GM12878 (cell line): ENCODE measurements at regions of chr16 and their contacts with region 1.

Region 1: GRCh38 chr16:35365675-35366074 is 1906.3 kb downstream of the TP53TG3F start:
- DNase-seq: no peak
- ATAC-seq: no peak
- H3K4me3 ChIP-seq: no peak overlapping the region
- H3K27ac ChIP-seq: no peak overlapping the region
- H3K4me1 ChIP-seq: no peaks in the 10 kb centered on the region
- H3K27me3 ChIP-seq: no peaks in the 10 kb centered on the region
- CTCF ChIP-seq: no peak
- EP300 ChIP-seq: no peak
- POLR2A ChIP-seq: no peak
- RAD21 ChIP-seq: no peak

Region 2: GRCh38 chr16:35252356-35252941 is 113.2 kb before region 1 on chr16:
- CTCF ChIA-PET with region 1: no interaction called
- POLR2A ChIA-PET with region 1: no interaction called
- RAD21 ChIA-PET with region 1: no interaction called
- SMC1A ChIA-PET with region 1: no interaction called
- in situ Hi-C with region 1: loop called (anchors 25 kb)
- intact Hi-C with region 1: no loop called
- DNase-seq: no peak
- ATAC-seq: no peak
- H3K4me3 ChIP-seq: no peak overlapping the region
- H3K27ac ChIP-seq: no peak overlapping the region
- H3K4me1 ChIP-seq: no peaks in the 10 kb centered on the region
- H3K27me3 ChIP-seq: no peaks in the 10 kb centered on the region
- CTCF ChIP-seq: no peak
- EP300 ChIP-seq: no peak
- POLR2A ChIP-seq: no peak
- RAD21 ChIP-seq: no peak

Region 3: GRCh38 chr16:35305476-35305875 is 60.2 kb before region 1 on chr16:
- CTCF ChIA-PET with region 1: no interaction called
- POLR2A ChIA-PET with region 1: no interaction called
- RAD21 ChIA-PET with region 1: no interaction called
- SMC1A ChIA-PET with region 1: no interaction called
- in situ Hi-C with region 1: no loop called
- intact Hi-C with region 1: loop called (anchors 10 kb)
- DNase-seq: no peak
- ATAC-seq: no peak
- H3K4me3 ChIP-seq: no peak overlapping the region
- H3K27ac ChIP-seq: no peak overlapping the region
- H3K4me1 ChIP-seq: no peaks in the 10 kb centered on the region
- H3K27me3 ChIP-seq: no peaks in the 10 kb centered on the region
- CTCF ChIP-seq: no peak
- EP300 ChIP-seq: no peak
- POLR2A ChIP-seq: no peak
- RAD21 ChIP-seq: no peak

Region 4: DNA sequence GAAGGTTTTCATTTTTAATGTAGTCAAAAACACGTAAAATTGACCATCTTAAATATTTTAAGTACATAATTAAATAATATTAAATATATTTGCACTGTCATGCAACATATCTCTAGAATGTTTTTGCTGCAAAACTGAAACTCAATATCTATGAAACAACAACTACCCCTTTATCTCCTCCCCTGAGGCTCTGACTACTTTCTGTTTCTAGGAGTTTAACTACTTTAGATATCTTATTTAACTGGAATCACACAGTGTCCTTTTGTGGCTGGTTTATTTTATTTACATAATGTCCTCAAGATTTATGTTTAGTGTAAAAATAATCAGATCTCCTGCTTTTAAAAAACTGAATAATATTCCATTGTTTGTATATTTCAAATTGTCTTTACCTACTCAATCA is 97.7 kb after region 1 on chr16:
- CTCF ChIA-PET with region 1: no interaction called
- POLR2A ChIA-PET with region 1: no interaction called
- RAD21 ChIA-PET with region 1: no interaction called
- SMC1A ChIA-PET with region 1: no interaction called
- in situ Hi-C with region 1: no loop called
- intact Hi-C with region 1: loop called (anchors 10 kb)
- DNase-seq: no peak
- ATAC-seq: no peak
- H3K4me3 ChIP-seq: no peak overlapping the region
- H3K27ac ChIP-seq: no peak overlapping the region
- H3K4me1 ChIP-seq: no peaks in the 10 kb centered on the region
- H3K27me3 ChIP-seq: no peaks in the 10 kb centered on the region
- CTCF ChIP-seq: no peak
- EP300 ChIP-seq: no peak
- POLR2A ChIP-seq: no peak
- RAD21 ChIP-seq: no peak